Activated CD4-positive, alpha-beta memory T cell treated with anti-CD3 and anti-CD28 coated beads, Interleukin-2, amount 10 ng/mL, durations not matched to agents 7 days and 5 days (primary cell): ENCODE measurements at regions of chr5 and their contacts with region 1.

Region 1: GRCh38 chr5:151164686-151165392 is 7.3 kb upstream of the ANXA6 start:
- DNase-seq: peak; percentile 86
- H3K4me3 Mint-ChIP-seq: no peak overlapping the region
- H3K27ac Mint-ChIP-seq: no peak overlapping the region
- H3K4me1 Mint-ChIP-seq: peaks cover 7% of the 10 kb centered on the region
- H3K27me3 Mint-ChIP-seq: no peaks in the 10 kb centered on the region

Region 2: DNA sequence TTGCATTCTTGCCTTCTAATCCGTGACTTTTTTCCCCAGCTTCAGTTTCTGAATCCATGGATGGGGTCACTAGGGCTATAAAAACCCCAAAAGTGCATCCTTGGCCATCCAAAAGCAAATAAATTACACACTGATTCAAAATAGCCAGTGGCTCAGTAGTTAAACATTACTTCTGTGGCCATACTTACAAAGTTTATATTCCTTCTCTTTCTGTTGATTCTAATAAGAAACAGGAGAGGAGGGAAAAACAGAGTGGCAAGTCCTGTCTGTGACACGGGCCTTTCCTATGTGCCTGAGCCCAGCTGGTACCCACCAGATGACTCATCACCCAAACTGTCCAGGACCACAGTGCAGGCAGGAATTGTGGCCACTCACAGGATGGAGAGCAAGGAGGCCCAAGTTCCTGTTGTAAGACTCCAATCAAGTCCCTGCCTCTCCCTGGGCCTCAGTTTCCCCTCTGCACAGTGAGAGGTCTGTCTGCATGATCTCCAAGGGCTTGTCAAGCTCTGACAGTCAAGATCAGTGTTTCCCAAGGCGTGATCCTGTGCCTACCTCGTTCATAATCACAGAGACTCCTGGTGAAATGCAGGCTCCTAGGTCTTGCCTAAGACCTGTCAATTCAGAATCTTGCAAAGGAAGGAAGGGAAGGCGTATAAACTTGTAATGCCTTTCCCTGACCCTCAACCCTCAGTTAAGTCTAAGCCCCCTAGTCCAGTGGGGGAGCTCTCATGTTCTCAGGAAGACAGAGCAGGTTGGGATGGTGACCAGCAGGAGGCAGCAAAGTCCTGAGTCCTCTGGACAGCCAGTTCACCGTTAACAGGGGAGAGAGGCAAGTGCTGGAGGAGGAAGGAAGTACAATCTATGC is 113.5 kb before region 1 on chr5:
- CTCF ChIA-PET with region 1: interaction called, 63 read pairs
- POLR2A ChIA-PET with region 1: interaction called, 3 read pairs
- DNase-seq: peak; percentile 73
- H3K4me3 Mint-ChIP-seq: no peak overlapping the region
- H3K27ac Mint-ChIP-seq: peak overlapping the region; percentile 26
- H3K4me1 Mint-ChIP-seq: peaks cover 11% of the 10 kb centered on the region
- H3K27me3 Mint-ChIP-seq: no peaks in the 10 kb centered on the region

Region 3: GRCh38 chr5:151134238-151134637 is 30.6 kb before region 1 on chr5:
- CTCF ChIA-PET with region 1: interaction called, 24 read pairs
- POLR2A ChIA-PET with region 1: no interaction called
- DNase-seq: no peak
- H3K4me3 Mint-ChIP-seq: no peak overlapping the region
- H3K27ac Mint-ChIP-seq: peak overlapping the region; percentile 14
- H3K4me1 Mint-ChIP-seq: peaks cover 53% of the 10 kb centered on the region
- H3K27me3 Mint-ChIP-seq: no peaks in the 10 kb centered on the region

Region 4: DNA sequence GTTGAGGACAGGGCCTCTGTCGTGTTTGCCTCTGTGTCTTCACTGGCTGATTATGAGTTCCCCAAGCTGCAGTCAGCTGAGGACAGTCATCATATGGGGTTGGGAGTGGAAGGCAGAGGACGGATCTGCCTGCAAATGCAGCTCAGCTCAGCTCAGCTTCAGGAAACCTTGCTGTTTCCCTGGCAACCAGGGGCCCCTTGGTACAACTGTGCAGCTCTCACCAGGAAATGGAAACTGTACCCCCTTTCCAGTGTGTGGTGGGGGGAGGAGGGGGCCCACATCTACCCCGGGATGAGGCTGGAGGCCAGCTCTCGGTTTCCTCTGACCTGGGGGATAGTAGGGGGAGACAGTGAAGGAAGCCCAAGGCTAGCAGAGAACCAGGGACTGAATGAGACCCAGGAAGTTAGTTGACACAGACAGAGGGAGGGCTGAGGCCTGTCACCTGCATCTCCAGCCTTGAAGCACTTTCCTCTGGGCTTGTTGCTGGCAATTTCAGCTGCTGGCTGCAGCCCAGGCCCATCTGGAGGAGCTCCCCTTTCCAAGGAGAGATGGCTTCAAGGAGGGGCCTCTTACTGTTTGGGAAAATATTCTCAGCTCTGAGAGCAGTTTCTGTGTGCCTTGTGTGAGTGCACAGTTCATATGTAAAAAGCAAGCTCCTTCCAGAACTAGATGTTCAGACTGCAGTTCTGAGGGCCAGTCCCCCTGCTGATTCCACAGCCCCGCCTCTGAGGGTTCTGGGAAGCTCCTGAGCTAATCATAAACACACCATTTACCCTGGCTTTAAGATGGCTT is 14.2 kb before region 1 on chr5:
- CTCF ChIA-PET with region 1: interaction called, 43 read pairs
- POLR2A ChIA-PET with region 1: interaction called, 5 read pairs
- DNase-seq: peak; percentile 83
- H3K4me3 Mint-ChIP-seq: peak overlapping the region; percentile 50
- H3K27ac Mint-ChIP-seq: peak overlapping the region; percentile 96
- H3K4me1 Mint-ChIP-seq: peaks cover 95% of the 10 kb centered on the region
- H3K27me3 Mint-ChIP-seq: no peaks in the 10 kb centered on the region

Region 5: GRCh38 chr5:151213800-151214613 is 49.2 kb after region 1 on chr5:
- CTCF ChIA-PET with region 1: interaction called, 14 read pairs
- POLR2A ChIA-PET with region 1: interaction called, 8 read pairs
- DNase-seq: peak; percentile 92
- H3K4me3 Mint-ChIP-seq: peak overlapping the region; percentile 86
- H3K27ac Mint-ChIP-seq: peak overlapping the region; percentile 98
- H3K4me1 Mint-ChIP-seq: peaks cover 77% of the 10 kb centered on the region
- H3K27me3 Mint-ChIP-seq: no peaks in the 10 kb centered on the region

Region 6: GRCh38 chr5:151239237-151239861 is 74.5 kb after region 1 on chr5:
- CTCF ChIA-PET with region 1: interaction called, 51 read pairs
- POLR2A ChIA-PET with region 1: no interaction called
- DNase-seq: peak; percentile 52
- H3K4me3 Mint-ChIP-seq: no peak overlapping the region
- H3K27ac Mint-ChIP-seq: no peak overlapping the region
- H3K4me1 Mint-ChIP-seq: peaks cover 40% of the 10 kb centered on the region
- H3K27me3 Mint-ChIP-seq: no peaks in the 10 kb centered on the region

Region 7: DNA sequence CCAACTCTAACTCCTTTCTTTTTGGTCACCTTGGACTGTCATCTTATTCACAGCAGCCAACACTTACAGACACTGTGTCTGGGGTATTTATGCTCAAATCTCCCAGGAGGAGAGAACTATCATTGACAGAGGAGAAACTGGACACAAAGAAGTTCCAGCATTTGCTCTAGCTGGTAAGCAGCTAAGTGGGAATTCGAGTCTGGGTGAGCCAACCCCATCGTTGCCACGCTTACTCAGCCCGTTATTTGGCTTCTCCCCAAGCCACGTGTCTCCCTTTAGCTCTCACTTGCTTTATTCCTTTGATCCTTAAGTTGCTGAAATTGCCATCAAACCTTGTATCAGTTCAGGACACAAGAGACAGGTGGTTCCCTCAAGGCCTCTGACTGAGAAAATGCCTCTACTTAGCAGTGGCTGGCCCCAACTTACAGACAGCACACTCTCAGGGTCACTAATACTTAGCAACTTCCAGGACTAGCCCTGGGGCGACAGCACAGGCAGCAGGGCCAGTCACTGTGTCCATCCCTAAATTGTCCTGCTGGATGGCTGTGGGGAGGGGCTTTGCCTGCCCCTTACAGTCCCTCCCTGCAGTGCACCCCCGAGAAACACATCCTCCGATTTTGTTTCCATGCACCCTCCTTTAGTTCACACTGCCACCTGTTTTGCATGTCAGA is 181.1 kb after region 1 on chr5:
- CTCF ChIA-PET with region 1: no interaction called
- POLR2A ChIA-PET with region 1: no interaction called
- DNase-seq: no peak
- H3K4me3 Mint-ChIP-seq: no peak overlapping the region
- H3K27ac Mint-ChIP-seq: no peak overlapping the region
- H3K4me1 Mint-ChIP-seq: no peaks in the 10 kb centered on the region
- H3K27me3 Mint-ChIP-seq: peaks cover 34% of the 10 kb centered on the region